Testis (tissue), 5 donors: ENCODE measurements at regions of chr2 and their contacts with region 1.

Region 1: GRCh38 chr2:231666171-231667095 is 41.9 kb upstream of the PTMA start:
- DNase-seq: peak; percentile 87
- H3K4me3 ChIP-seq: peak overlapping the region; percentile 36 to 50
- H3K27ac ChIP-seq: peak overlapping the region; percentile 86 to 88
- H3K4me1 ChIP-seq: peaks cover 13% of the 10 kb centered on the region
- H3K27me3 ChIP-seq: no peaks in the 10 kb centered on the region
- CTCF ChIP-seq: peak in 1 of 3 experiments; percentile 28
- POLR2A ChIP-seq: peak; percentile 28

Region 2: DNA sequence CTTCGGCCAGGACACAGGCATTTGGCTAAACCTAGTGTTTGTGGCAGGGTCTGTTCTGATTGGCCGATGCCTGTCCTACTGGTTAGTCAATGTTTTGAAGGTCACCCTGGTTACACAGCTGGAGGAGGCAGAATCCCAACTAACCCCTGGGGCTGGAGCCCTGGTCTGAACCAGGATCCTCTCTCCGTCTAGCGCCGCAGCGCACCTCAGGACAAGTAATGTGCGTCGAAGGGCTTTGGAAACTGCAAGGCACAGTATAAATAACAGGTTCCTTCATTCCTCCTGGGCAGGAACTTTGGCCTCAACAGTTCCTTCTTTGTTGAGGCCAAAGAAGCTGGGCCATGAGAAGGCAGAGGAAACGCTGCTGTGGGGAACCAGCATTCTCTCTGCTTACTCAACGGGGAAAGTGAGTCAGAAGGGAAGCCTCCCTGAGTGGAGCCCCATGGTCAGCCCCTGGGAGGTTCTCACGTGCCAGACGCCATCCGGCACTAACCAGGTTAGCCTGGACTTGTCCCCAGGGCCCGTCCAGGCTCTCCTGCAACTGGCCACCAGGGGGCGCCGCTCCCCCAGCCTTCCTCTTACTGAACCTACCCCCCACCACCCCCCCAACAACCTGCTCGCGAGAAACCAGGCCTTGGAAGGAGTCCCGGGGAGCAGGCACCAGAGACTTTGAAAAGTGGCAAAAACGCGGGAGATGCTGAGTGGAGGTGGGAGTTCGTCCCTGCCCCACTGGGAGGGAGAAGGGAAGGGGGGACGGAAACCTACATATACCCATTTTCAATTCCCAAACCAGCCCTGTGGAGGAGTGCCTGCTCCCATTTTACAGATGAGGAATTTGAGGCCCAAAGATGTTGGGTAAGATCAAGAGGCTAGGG is 54.0 kb before region 1 on chr2:
- intact Hi-C with region 1: loop called (anchors 2 kb)
- DNase-seq: peak; percentile 92
- H3K4me3 ChIP-seq: no peak overlapping the region
- H3K27ac ChIP-seq: peak overlapping the region; percentile 85 to 86
- H3K4me1 ChIP-seq: peaks cover 34% of the 10 kb centered on the region
- H3K27me3 ChIP-seq: no peaks in the 10 kb centered on the region
- CTCF ChIP-seq: peak; percentile 90 to 99 (median 97)
- POLR2A ChIP-seq: no peak